GM10248 (cell line): ENCODE measurements at regions of chr5 and their contacts with region 1.

Region 1: GRCh38 chr5:132446669-132447068 is 43.9 kb downstream of the IRF1 start:
- DNase-seq: no peak
- CTCF ChIP-seq: no peak

Region 2: GRCh38 chr5:132479111-132479951 is 32.7 kb after region 1 on chr5:
- CTCF ChIA-PET with region 1: no interaction called
- POLR2A ChIA-PET with region 1: interaction called, 16 read pairs
- DNase-seq: no peak
- CTCF ChIP-seq: no peak